Sigmoid colon (tissue), 7 donors: ENCODE measurements at regions of chr17 and their contacts with region 1.

Region 1: GRCh38 chr17:49707608-49708514 is at the start of gene SLC35B1:
- DNase-seq: peak; percentile 99
- H3K4me3 ChIP-seq: peak within 1 kb of the TSS; percentile 76 to 93 (median 85)
- H3K27ac ChIP-seq: peak within 1 kb of the TSS; percentile 89 to 92 (median 90)
- H3K4me1 ChIP-seq: peaks cover 0 to 23% (median 22%) of the 10 kb centered on the region in 4 donors
- H3K27me3 ChIP-seq: no peaks in the 10 kb centered on the region
- CTCF ChIP-seq: peak; percentile 4 to 54 (median 48)
- EP300 ChIP-seq: no peak
- POLR2A ChIP-seq: peak; percentile 42 to 50
- total RNA-seq, gene SLC35B1: 13.0 to 34.9 (median 20.0) TPM

Region 2: DNA sequence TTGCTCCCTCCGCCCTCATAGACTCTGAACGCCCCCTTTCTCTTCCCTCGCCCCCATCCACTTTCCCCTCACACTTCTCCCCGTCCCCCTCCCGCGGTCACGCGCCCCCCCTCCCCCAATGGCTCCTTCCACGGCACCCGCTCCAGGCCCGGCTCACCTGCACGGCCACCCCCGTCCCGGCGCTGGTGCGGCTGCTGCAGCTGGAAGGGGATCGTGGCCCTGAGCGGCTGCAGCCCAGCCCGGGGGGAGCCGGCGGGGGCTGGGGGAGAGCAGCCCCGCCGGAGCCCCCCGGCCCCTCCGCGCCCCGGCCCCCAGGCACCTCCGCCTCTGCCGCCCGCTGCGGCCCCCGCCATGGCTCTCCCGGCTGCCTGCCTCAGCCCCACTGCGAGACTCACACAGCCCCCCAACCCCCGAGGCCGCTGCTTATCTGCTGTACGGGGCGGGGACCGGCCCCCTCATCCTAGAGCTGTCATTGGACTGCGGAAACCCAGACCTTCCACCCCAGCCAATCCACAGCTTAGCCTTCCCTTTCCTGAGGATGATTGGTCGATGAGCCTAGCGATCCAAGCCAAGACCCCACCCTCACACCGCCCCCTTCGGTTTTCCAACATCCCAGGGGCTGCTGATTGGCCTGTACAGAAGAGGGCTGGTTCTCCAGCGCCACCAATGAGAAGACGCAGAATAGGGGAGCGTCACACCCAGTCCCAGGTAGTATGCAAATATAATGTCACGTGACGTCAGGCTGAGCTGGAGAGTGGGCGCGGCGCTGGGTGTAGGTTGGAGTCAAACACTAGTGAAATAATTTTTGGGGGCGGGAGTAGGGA is 56.1 kb after region 1 on chr17 and contains the start of gene FAM117A:
- intact Hi-C with region 1: loop called (anchors 5 kb)
- DNase-seq: peak; percentile 99
- H3K4me3 ChIP-seq: peak within 1 kb of the TSS; percentile 70 to 99 (median 98)
- H3K27ac ChIP-seq: peak within 1 kb of the TSS; percentile 85 to 94 (median 92)
- H3K4me1 ChIP-seq: peaks cover 0 to 51% (median 40%) of the 10 kb centered on the region in 4 donors
- H3K27me3 ChIP-seq: no peaks in the 10 kb centered on the region
- CTCF ChIP-seq: no peak
- EP300 ChIP-seq: no peak
- POLR2A ChIP-seq: peak; percentile 30 to 40
- total RNA-seq, gene FAM117A: 11.1 to 34.6 (median 27.4) TPM

Region 3: GRCh38 chr17:49779739-49780231 is 71.9 kb after region 1 on chr17:
- intact Hi-C with region 1: loop called (anchors 1 kb)
- DNase-seq: no peak
- H3K4me3 ChIP-seq: no peak overlapping the region
- H3K27ac ChIP-seq: peak overlapping the region; percentile 25 to 87 (median 56)
- H3K4me1 ChIP-seq: peaks cover 0 to 73% (median 57%) of the 10 kb centered on the region in 4 donors
- H3K27me3 ChIP-seq: no peaks in the 10 kb centered on the region
- CTCF ChIP-seq: peak in 3 of 4 experiments; percentile 43 to 62 (median 54)
- EP300 ChIP-seq: no peak
- POLR2A ChIP-seq: no peak

Region 4: GRCh38 chr17:49851387-49852291 is 143.8 kb after region 1 on chr17:
- intact Hi-C with region 1: loop called (anchors 5 kb)
- DNase-seq: peak; percentile 80
- H3K4me3 ChIP-seq: peak overlapping the region; percentile 27 to 63 (median 58)
- H3K27ac ChIP-seq: peak overlapping the region in 2 of 4 donors; percentile 42 to 58
- H3K4me1 ChIP-seq: peaks cover 0 to 22% (median 20%) of the 10 kb centered on the region in 4 donors
- H3K27me3 ChIP-seq: no peaks in the 10 kb centered on the region
- CTCF ChIP-seq: peak; percentile 36 to 64 (median 52)
- EP300 ChIP-seq: no peak
- POLR2A ChIP-seq: no peak

Region 5: GRCh38 chr17:49997791-49998703 is 290.2 kb after region 1 on chr17:
- intact Hi-C with region 1: loop called (anchors 5 kb)
- DNase-seq: peak; percentile 85
- H3K4me3 ChIP-seq: no peak overlapping the region
- H3K27ac ChIP-seq: no peak overlapping the region
- H3K4me1 ChIP-seq: peaks cover 0 to 36% (median 35%) of the 10 kb centered on the region in 4 donors
- H3K27me3 ChIP-seq: peaks cover 39 to 94% (median 74%) of the 10 kb centered on the region in 3 donors
- CTCF ChIP-seq: peak; percentile 80 to 93 (median 90)
- EP300 ChIP-seq: no peak
- POLR2A ChIP-seq: no peak